Stomach (tissue), 19 donors: ENCODE measurements at regions of chr10 and their contacts with region 1.

Region 1: GRCh38 chr10:24209946-24210491 is 1.1 kb downstream of the KIAA1217 start:
- DNase-seq: peak in 1 of 2 donors; percentile 75
- H3K4me3 ChIP-seq: peak overlapping the region; percentile 45 to 58 (median 52)
- H3K27ac ChIP-seq: peak overlapping the region in 4 of 5 donors; percentile 78 to 91 (median 82)
- H3K4me1 ChIP-seq: peaks cover 17 to 41% (median 34%) of the 10 kb centered on the region in 4 donors
- H3K27me3 ChIP-seq: no peaks in the 10 kb centered on the region
- CTCF ChIP-seq: no peak
- EP300 ChIP-seq: no peak
- POLR2A ChIP-seq: no peak

Region 2: DNA sequence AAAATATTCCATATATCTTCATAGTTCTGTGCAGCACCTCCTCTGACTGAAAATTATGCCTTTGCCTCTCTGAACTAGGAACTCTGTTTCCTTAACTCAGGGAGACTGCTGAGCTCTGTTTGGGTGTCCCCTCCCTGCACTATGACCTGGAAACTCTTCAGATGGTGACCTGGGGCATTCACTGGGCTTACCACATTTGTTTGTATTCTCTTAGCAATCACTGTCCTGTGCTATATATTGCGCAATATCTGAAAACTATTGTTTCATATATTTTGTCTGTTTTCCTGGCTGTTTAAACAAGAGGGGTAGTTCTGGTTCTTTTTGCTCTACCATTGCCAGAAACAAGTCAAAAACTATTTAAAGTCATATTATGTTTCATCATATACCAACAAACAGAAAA is 182.9 kb before region 1 on chr10:
- intact Hi-C with region 1: no loop called
- DNase-seq: no peak
- H3K4me3 ChIP-seq: no peak overlapping the region
- H3K27ac ChIP-seq: no peak overlapping the region
- H3K4me1 ChIP-seq: no peaks in the 10 kb centered on the region
- H3K27me3 ChIP-seq: no peaks in the 10 kb centered on the region
- CTCF ChIP-seq: no peak
- EP300 ChIP-seq: no peak
- POLR2A ChIP-seq: no peak

Region 3: GRCh38 chr10:24349379-24350001 is 139.5 kb after region 1 on chr10:
- intact Hi-C with region 1: loop called (anchors 10 kb)
- DNase-seq: peak in 1 of 2 donors; percentile 58
- H3K4me3 ChIP-seq: no peak overlapping the region
- H3K27ac ChIP-seq: peak overlapping the region in 1 of 5 donors; percentile 11
- H3K4me1 ChIP-seq: peaks cover 2 to 31% (median 21%) of the 10 kb centered on the region in 4 donors
- H3K27me3 ChIP-seq: no peaks in the 10 kb centered on the region
- CTCF ChIP-seq: no peak
- EP300 ChIP-seq: no peak
- POLR2A ChIP-seq: no peak

Region 4: GRCh38 chr10:24428410-24428782 is 218.4 kb after region 1 on chr10:
- intact Hi-C with region 1: no loop called
- DNase-seq: peak in 1 of 2 donors; percentile 34
- H3K4me3 ChIP-seq: no peak overlapping the region
- H3K27ac ChIP-seq: no peak overlapping the region
- H3K4me1 ChIP-seq: peaks cover 0 to 11% (median 7%) of the 10 kb centered on the region in 4 donors
- H3K27me3 ChIP-seq: no peaks in the 10 kb centered on the region
- CTCF ChIP-seq: no peak
- EP300 ChIP-seq: no peak
- POLR2A ChIP-seq: no peak